GM12878 (cell line): ENCODE measurements at regions of chr15 and their contacts with region 1.

Region 1: GRCh38 chr15:67080900-67081431 is 15.6 kb downstream of the SMAD3 start:
- DNase-seq: peak; percentile 99
- ATAC-seq: peak; percentile 58
- H3K4me3 ChIP-seq: peak overlapping the region; percentile 56
- H3K27ac ChIP-seq: peak overlapping the region; percentile 93
- H3K4me1 ChIP-seq: peaks cover 86% of the 10 kb centered on the region
- H3K27me3 ChIP-seq: no peaks in the 10 kb centered on the region
- CTCF ChIP-seq: peak; percentile 44 to 51 (median 49)
- EP300 ChIP-seq: peak; percentile 86 to 93; a peak in 3 of 4 replicates
- POLR2A ChIP-seq: peak; percentile 38; the same call in 1 of the 2 replicates
- RAD21 ChIP-seq: peak; percentile 60

Region 2: DNA sequence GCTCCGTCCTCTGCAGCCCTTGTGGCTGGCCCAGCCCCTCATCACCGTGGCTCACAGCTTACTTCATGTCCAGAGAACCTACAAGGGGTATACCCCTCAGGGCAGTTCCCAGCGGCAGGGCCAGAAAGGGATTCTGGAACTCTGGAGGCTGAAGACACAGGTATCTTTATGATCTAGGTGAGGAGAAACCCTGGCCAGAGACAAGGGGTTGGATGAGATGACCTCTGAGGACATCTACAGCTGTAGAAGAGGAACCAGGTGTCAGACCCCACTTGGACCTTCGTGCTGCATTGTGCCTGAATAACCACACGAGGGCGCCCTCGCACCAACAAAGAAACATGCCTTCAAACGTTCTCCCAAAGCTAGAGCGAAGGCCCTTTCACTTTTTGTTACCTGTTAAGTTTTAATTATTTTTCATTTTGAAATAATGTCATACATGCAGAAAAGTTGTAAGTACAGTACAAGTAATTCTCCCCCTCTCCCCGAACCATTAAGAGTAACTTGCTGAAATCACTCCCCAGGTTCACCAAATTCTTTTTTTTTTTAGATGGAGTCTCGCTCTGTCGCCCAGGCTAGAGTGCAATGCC is 134.3 kb before region 1 on chr15:
- CTCF ChIA-PET with region 1: interaction called, 64 read pairs
- POLR2A ChIA-PET with region 1: no interaction called
- RAD21 ChIA-PET with region 1: interaction called, 26 read pairs
- SMC1A ChIA-PET with region 1: interaction called, 28 read pairs
- in situ Hi-C with region 1: no loop called
- intact Hi-C with region 1: loop called (anchors 5 kb)
- DNase-seq: peak; percentile 39
- ATAC-seq: peak; percentile 87
- H3K4me3 ChIP-seq: no peak overlapping the region
- H3K27ac ChIP-seq: no peak overlapping the region
- H3K4me1 ChIP-seq: peaks cover 6% of the 10 kb centered on the region
- H3K27me3 ChIP-seq: no peaks in the 10 kb centered on the region; a peak in 1 of 4 replicates
- CTCF ChIP-seq: peak; percentile 85 to 97 (median 95)
- EP300 ChIP-seq: no peak
- POLR2A ChIP-seq: no peak
- RAD21 ChIP-seq: peak; percentile 98

Region 3: GRCh38 chr15:67091071-67091979 is 10.4 kb after region 1 on chr15:
- CTCF ChIA-PET with region 1: interaction called, 11 read pairs
- POLR2A ChIA-PET with region 1: interaction called, 32 read pairs
- RAD21 ChIA-PET with region 1: interaction called, 77 read pairs
- SMC1A ChIA-PET with region 1: interaction called, 31 read pairs
- in situ Hi-C with region 1: no loop called
- intact Hi-C with region 1: no loop called
- DNase-seq: peak; percentile 80
- ATAC-seq: peak; percentile 86
- H3K4me3 ChIP-seq: peak overlapping the region; percentile 33; the same call in 1 of the 2 replicates
- H3K27ac ChIP-seq: peak overlapping the region; percentile 57
- H3K4me1 ChIP-seq: peaks cover 82% of the 10 kb centered on the region
- H3K27me3 ChIP-seq: no peaks in the 10 kb centered on the region
- CTCF ChIP-seq: no peak
- EP300 ChIP-seq: peak; percentile 85 to 98
- POLR2A ChIP-seq: peak; percentile 41; the same call in 1 of the 2 replicates
- RAD21 ChIP-seq: no peak; the same call in 1 of the 2 replicates

Region 4: GRCh38 chr15:67114846-67115600 is 34.1 kb after region 1 on chr15:
- CTCF ChIA-PET with region 1: interaction called, 6 read pairs
- POLR2A ChIA-PET with region 1: interaction called, 4 read pairs
- RAD21 ChIA-PET with region 1: interaction called, 18 read pairs
- SMC1A ChIA-PET with region 1: interaction called, 49 read pairs
- in situ Hi-C with region 1: no loop called
- intact Hi-C with region 1: loop called (anchors 5 kb)
- DNase-seq: no peak
- ATAC-seq: no peak
- H3K4me3 ChIP-seq: no peak overlapping the region
- H3K27ac ChIP-seq: 0 out of 2 replicates have a peak overlapping the region, but pooled peaks have one; percentile 81
- H3K4me1 ChIP-seq: peaks cover 46% of the 10 kb centered on the region
- H3K27me3 ChIP-seq: no peaks in the 10 kb centered on the region
- CTCF ChIP-seq: no peak
- EP300 ChIP-seq: no peak
- POLR2A ChIP-seq: no peak
- RAD21 ChIP-seq: no peak

Region 5: DNA sequence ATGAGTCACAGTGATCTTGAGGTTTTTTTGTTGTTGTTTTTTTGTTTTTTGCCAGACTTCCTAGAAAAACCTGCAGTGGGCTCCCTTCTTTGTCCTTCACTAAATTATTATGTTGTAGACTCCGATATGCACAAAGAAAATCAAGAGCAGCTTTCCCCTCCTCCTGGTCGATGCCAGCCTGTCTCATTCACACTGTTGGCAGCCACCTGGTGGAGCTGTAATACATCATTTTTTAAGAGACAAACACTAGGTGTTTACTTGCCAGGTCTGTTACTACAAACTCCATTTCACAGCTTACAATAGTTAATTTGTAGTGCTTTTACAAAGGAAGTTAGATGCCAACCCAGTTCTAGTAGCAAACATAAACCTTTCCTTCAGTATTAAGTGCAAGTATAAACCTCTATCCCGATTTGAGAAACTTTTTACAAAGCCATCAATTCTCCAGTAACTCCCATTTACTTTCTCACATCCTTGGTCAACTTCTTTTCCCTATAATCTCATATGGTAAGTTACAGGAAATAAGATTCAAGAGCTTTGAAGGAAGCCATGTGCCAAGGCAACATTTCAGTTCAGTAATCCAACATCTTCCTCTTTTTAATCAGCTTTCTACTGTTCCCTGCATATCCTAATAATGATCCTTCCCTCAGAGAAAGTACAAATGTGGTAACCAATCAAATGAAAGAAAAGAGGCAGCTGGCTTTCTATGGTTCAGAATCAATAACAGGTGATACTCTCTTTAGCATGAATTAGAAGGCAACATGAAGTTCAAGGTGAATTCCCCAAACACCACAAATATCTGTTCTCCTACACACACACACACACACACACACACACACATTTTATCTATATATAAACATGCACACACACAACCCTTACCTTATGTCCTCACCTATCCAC is 159.5 kb after region 1 on chr15:
- CTCF ChIA-PET with region 1: interaction called, 4 read pairs
- POLR2A ChIA-PET with region 1: no interaction called
- RAD21 ChIA-PET with region 1: interaction called, 7 read pairs
- SMC1A ChIA-PET with region 1: interaction called, 22 read pairs
- in situ Hi-C with region 1: no loop called
- intact Hi-C with region 1: loop called (anchors 5 kb)
- DNase-seq: peak; percentile 8
- ATAC-seq: peak; percentile 62
- H3K4me3 ChIP-seq: peak overlapping the region; percentile 50; the same call in 1 of the 2 replicates
- H3K27ac ChIP-seq: peak overlapping the region; percentile 59
- H3K4me1 ChIP-seq: peaks cover 30% of the 10 kb centered on the region
- H3K27me3 ChIP-seq: no peaks in the 10 kb centered on the region
- CTCF ChIP-seq: peak; percentile 25 to 46 (median 38); a peak in 5 of 6 replicates
- EP300 ChIP-seq: no peak
- POLR2A ChIP-seq: no peak
- RAD21 ChIP-seq: peak; percentile 45